AG04449 (cell line): ENCODE measurements at regions of chr11 and their contacts with region 1.

Region 1: GRCh38 chr11:126440792-126441514 is 85.5 kb downstream of the ST3GAL4 start:
- DNase-seq: no peak
- H3K4me3 ChIP-seq: no peak overlapping the region
- CTCF ChIP-seq: peak; percentile 92

Region 2: DNA sequence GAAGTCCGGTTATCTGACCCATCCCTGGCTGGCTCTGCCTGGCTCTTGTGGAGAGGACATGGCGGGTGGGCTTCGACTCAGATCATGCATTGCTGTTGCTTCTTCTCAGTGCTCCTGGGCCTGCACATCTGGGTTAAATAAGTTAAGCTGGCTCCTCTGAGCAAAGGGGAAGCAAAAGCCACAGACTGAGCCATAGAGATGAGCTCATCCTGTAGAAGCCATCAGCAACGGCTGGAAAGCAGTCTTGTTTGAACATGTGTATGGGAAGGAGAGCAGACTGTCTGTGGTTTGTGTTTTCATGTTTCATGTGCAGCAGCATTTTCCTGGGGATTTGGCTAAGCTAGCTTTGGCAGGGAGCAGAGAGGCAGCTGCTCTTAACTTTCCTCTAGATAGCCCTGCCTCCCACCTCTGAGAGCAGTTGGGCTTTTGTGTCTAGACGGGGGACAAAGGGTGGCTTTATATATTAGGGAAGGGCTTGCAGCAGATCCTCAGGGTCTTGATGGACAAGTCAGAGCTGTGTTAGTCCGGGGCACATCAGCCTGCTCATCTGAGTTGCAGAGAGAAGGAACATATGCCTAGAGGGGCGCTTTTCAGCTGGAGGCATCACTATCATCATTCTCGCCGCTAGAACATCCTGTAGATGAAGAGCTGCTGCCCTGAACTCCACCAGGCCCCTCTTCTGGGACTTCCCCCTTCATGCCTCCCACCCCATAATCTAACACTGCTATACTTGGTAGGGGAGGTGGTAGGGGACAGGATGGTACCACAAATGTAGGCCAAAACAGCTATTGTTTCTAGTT is 122.2 kb before region 1 on chr11:
- CTCF ChIA-PET with region 1: interaction called, 10 read pairs
- POLR2A ChIA-PET with region 1: no interaction called
- DNase-seq: peak; percentile 85
- H3K4me3 ChIP-seq: peak overlapping the region; percentile 47
- CTCF ChIP-seq: no peak

Region 3: GRCh38 chr11:126452241-126453101 is 11.5 kb after region 1 on chr11:
- CTCF ChIA-PET with region 1: interaction called, 23 read pairs
- POLR2A ChIA-PET with region 1: no interaction called
- DNase-seq: no peak
- H3K4me3 ChIP-seq: no peak overlapping the region
- CTCF ChIP-seq: no peak

Region 4: DNA sequence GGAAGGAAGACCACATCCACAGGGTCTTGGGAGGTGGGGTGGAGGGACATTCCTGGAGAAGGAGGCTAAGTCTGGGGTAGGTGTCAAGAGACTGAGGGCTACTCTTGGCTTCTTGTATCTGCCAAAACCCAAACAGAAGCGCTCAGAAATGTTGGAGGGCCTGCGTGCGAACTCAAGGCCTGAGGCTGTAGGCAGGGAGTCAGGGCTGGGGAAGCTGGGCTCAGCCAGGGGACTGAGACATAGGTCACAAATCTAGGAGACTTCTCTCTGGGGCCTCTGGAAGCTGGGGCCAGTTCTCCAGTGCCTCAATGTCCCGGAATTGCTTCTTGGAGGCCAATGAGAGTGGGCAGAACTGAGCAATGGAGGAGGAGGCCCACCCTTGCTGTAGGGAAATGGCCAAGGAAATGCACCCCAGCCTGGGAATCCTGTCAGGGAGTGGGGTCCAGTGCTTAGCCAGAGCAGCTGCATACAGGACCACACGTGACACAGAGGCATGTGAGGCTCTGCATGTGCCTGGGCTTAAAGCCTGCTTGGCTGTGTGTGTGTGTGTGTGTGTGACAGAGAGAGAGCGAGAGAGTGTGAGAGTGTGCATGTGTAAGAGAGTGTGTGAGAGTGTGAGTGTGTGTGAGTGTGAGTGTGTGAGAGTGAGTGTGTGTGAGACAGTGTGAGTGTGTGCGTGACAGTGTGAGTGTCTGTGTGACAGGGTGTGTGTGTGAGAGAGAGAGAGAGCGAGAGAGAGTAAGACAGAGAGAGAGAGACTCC is 55.8 kb after region 1 on chr11:
- CTCF ChIA-PET with region 1: no interaction called
- POLR2A ChIA-PET with region 1: no interaction called
- DNase-seq: no peak
- H3K4me3 ChIP-seq: no peak overlapping the region
- CTCF ChIP-seq: no peak

Region 5: GRCh38 chr11:126561327-126561893 is 120.5 kb after region 1 on chr11:
- CTCF ChIA-PET with region 1: no interaction called
- POLR2A ChIA-PET with region 1: no interaction called
- DNase-seq: no peak
- H3K4me3 ChIP-seq: no peak overlapping the region
- CTCF ChIP-seq: no peak

Region 6: DNA sequence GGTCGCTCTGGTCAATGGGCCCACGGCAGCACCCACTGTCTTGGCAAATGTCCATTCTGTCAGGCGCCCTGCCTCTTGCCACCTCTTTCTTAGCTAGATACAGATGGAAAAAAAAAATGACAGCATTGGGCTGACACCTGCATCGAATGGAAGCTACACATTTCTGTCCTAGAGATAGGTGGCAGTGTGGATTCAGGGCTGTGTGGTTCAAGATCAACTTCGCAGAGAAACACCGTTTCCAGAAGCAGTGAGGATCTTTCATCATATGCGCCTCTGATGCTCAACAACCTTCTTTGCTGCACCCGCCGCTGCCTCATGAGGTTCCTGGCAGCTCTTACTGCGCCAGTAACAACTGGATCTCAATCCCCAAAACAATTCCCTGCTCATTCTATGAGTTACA is 323.3 kb after region 1 on chr11:
- CTCF ChIA-PET with region 1: no interaction called
- POLR2A ChIA-PET with region 1: no interaction called
- DNase-seq: no peak
- H3K4me3 ChIP-seq: no peak overlapping the region
- CTCF ChIP-seq: no peak

Region 7: GRCh38 chr11:127345819-127346459 is 905.0 kb after region 1 on chr11:
- CTCF ChIA-PET with region 1: interaction called, 104 read pairs
- POLR2A ChIA-PET with region 1: no interaction called
- DNase-seq: no peak
- H3K4me3 ChIP-seq: no peak overlapping the region
- CTCF ChIP-seq: peak; percentile 79